GM12878 (cell line): ENCODE measurements at regions of chr5 and their contacts with region 1.

Region 1: DNA sequence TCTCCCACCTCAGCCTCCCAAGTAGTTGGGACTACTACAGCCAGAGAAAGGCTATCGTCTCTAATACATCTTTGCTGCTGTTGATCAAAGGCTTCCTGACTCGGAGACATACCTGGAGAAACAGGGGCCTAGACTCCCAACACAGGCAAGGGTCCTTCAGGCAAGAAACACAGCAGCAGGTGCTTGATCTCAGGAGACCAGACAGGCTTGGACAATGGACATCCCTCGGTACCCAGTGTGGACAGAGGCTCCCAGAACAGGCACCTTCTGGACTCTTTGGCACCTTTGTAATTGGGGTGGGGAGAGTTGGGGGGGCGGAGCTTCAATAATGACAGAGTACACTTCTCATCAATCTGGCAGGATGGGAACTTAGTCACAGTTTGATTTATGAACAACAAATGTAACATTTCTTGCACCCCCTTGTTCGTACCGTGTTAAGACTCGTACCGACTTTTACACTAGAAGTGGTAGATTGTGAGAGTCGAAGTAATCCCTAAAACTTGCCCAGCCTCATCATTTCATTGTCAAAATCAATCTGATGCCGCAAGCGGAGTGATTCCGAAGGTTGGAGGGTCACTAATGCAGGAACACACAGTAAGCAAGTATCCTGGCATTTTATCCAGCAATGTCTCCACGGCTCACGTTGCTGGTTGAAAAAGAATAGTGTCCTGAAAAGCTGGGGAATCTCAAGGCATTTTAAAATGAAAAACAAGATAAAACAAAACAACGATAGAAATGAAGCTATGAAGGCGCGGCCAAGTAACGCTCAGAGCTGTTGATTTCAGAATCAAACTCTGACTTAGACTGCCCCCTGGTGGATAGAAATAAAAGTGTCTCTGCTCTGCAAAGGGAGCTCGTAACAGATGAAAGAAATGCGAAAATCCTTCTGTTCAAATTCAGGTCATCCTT is 46.4 kb upstream of the STK32A start:
- DNase-seq: no peak
- ATAC-seq: peak; percentile 90
- H3K4me3 ChIP-seq: no peak overlapping the region
- H3K27ac ChIP-seq: no peak overlapping the region
- H3K4me1 ChIP-seq: no peaks in the 10 kb centered on the region
- H3K27me3 ChIP-seq: no peaks in the 10 kb centered on the region; a peak in 1 of 4 replicates
- CTCF ChIP-seq: peak; percentile 68 to 77 (median 70); a peak in 5 of 6 replicates
- EP300 ChIP-seq: no peak
- POLR2A ChIP-seq: no peak
- RAD21 ChIP-seq: peak; percentile 75

Region 2: GRCh38 chr5:146533260-146533857 is 655.1 kb before region 1 on chr5:
- CTCF ChIA-PET with region 1: interaction called, 62 read pairs
- POLR2A ChIA-PET with region 1: no interaction called
- RAD21 ChIA-PET with region 1: interaction called, 11 read pairs
- SMC1A ChIA-PET with region 1: interaction called, 27 read pairs
- in situ Hi-C with region 1: no loop called
- intact Hi-C with region 1: loop called (anchors 1 kb)
- DNase-seq: peak; percentile 44
- ATAC-seq: peak; percentile 95
- H3K4me3 ChIP-seq: no peak overlapping the region
- H3K27ac ChIP-seq: no peak overlapping the region
- H3K4me1 ChIP-seq: no peaks in the 10 kb centered on the region; the same call in 1 of the 2 replicates
- H3K27me3 ChIP-seq: no peaks in the 10 kb centered on the region
- CTCF ChIP-seq: peak; percentile 87 to 92 (median 90)
- EP300 ChIP-seq: no peak
- POLR2A ChIP-seq: no peak
- RAD21 ChIP-seq: peak; percentile 67

Region 3: GRCh38 chr5:146565764-146566367 is 622.6 kb before region 1 on chr5:
- CTCF ChIA-PET with region 1: interaction called, 10 read pairs
- POLR2A ChIA-PET with region 1: no interaction called
- RAD21 ChIA-PET with region 1: interaction called, 3 read pairs
- SMC1A ChIA-PET with region 1: interaction called, 4 read pairs
- in situ Hi-C with region 1: no loop called
- intact Hi-C with region 1: no loop called
- DNase-seq: no peak
- ATAC-seq: peak; percentile 100
- H3K4me3 ChIP-seq: no peak overlapping the region
- H3K27ac ChIP-seq: no peak overlapping the region
- H3K4me1 ChIP-seq: no peaks in the 10 kb centered on the region
- H3K27me3 ChIP-seq: no peaks in the 10 kb centered on the region; a peak in 1 of 4 replicates
- CTCF ChIP-seq: peak; percentile 62 to 64 (median 63)
- EP300 ChIP-seq: no peak
- POLR2A ChIP-seq: no peak
- RAD21 ChIP-seq: peak; percentile 54

Region 4: DNA sequence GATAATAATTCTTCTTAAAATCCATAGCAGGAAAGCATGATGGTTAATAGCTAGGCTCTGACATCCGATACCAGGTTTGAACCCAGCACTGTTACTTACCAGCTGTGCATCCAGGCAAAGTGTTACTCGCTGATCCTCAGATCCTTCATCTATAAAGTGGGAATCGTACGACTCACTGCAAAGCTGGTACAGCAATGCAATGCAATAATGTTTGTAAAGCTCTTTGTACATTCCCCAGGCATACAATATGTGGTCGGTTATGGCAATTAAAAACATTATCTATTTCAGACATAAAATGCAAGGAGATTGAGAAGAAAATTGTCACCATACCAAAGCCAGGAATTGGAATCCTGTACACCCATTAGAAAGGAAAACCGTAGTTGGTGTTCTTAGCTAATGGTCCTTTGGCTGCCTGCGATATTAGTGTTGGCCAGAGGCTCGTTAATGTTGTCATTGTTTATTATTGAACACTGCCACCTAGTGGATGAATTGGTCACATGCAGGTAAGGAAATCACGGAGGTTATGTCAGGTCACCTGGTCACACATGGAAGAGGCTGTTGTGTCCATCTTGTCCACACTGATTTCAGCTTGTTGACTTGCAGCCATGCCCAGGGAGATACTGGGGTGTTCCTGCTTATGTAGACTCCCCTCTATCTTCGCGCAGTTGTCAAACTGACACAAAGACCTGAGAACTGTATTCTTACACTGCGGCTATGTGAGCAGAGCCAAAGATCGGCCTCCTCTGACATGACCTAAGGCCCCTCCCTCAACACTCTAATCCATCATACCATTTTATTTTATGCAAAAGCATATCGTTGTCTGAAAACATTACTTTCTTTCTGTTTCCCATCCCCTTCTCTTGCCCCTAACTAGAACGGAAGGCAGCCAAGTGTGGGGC is 222.4 kb before region 1 on chr5:
- CTCF ChIA-PET with region 1: interaction called, 8 read pairs
- POLR2A ChIA-PET with region 1: no interaction called
- RAD21 ChIA-PET with region 1: interaction called, 13 read pairs
- SMC1A ChIA-PET with region 1: interaction called, 7 read pairs
- in situ Hi-C with region 1: no loop called
- intact Hi-C with region 1: no loop called
- DNase-seq: peak; percentile 26
- ATAC-seq: peak; percentile 99
- H3K4me3 ChIP-seq: no peak overlapping the region
- H3K27ac ChIP-seq: no peak overlapping the region
- H3K4me1 ChIP-seq: no peaks in the 10 kb centered on the region
- H3K27me3 ChIP-seq: no peaks in the 10 kb centered on the region
- CTCF ChIP-seq: peak; percentile 69 to 82 (median 72)
- EP300 ChIP-seq: no peak
- POLR2A ChIP-seq: no peak
- RAD21 ChIP-seq: peak; percentile 80

Region 5: DNA sequence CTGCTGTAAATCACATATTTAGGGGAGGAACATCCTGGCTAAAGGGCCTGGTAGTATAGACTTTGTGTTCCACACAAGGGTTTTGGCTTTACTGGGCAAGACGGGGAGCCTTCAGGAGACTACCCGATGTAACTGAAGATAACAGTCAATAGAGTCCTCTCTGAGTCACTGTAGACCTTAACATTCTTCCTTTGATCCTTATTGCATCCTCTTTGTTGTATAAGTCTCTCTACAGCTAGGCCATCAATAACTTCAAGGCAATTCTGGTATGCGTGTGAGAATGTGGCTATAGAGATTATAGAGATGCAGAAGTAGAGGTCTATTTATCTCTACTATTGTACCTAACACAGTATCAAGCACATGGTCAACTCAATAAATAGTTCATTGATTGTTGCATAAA is 20.9 kb before region 1 on chr5:
- CTCF ChIA-PET with region 1: interaction called, 11 read pairs
- POLR2A ChIA-PET with region 1: no interaction called
- RAD21 ChIA-PET with region 1: interaction called, 4 read pairs
- SMC1A ChIA-PET with region 1: interaction called, 3 read pairs
- in situ Hi-C with region 1: no loop called
- intact Hi-C with region 1: no loop called
- DNase-seq: no peak
- ATAC-seq: no peak
- H3K4me3 ChIP-seq: no peak overlapping the region
- H3K27ac ChIP-seq: no peak overlapping the region
- H3K4me1 ChIP-seq: no peaks in the 10 kb centered on the region
- H3K27me3 ChIP-seq: no peaks in the 10 kb centered on the region
- CTCF ChIP-seq: no peak
- EP300 ChIP-seq: no peak
- POLR2A ChIP-seq: no peak
- RAD21 ChIP-seq: no peak

Region 6: GRCh38 chr5:147200001-147200400 is 11.5 kb after region 1 on chr5:
- CTCF ChIA-PET with region 1: interaction called, 10 read pairs
- POLR2A ChIA-PET with region 1: no interaction called
- RAD21 ChIA-PET with region 1: interaction called, 4 read pairs
- SMC1A ChIA-PET with region 1: interaction called, 4 read pairs
- in situ Hi-C with region 1: no loop called
- intact Hi-C with region 1: no loop called
- DNase-seq: no peak
- ATAC-seq: no peak
- H3K4me3 ChIP-seq: no peak overlapping the region
- H3K27ac ChIP-seq: no peak overlapping the region
- H3K4me1 ChIP-seq: no peaks in the 10 kb centered on the region
- H3K27me3 ChIP-seq: no peaks in the 10 kb centered on the region
- CTCF ChIP-seq: no peak
- EP300 ChIP-seq: no peak
- POLR2A ChIP-seq: no peak
- RAD21 ChIP-seq: no peak